SK-N-SH (cell line): ENCODE measurements at regions of chr2 and their contacts with region 1.

Region 1: DNA sequence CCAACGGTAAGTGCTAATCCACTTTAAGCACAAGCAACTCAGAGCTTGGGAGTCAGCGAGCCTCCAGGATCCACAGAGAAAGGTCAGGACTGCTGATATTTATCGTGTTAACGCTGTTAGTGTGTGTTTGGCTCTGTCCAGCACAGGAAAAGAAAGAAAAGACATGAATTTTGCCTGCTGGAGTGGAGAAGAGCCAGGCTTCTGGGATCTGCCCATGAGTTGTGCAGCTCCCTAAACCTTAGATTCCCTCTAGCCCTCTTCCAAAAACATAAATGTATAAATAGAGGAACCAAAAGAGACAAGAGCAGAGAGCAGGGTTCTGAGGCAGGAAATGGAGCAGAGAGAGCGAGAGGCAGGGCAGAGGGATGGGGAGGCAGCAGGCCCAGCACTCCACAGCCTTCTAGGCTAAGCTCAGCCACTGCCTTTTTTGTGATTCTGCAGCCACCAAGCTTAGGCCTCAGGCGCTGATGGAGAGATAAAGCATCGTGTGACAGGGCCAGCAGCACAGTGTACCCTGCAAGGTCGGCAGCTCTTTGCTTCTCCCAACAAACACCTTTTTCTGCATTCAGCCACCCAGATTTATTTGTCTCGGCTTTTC is 14.5 kb upstream of the MAT2A start:
- DNase-seq: peak; percentile 75
- H3K4me3 ChIP-seq: no peak overlapping the region
- H3K27ac ChIP-seq: peak overlapping the region; percentile 40 to 98; a peak in 3 of 4 replicates
- H3K4me1 ChIP-seq: peaks cover 9 to 30% of the 10 kb centered on the region in 2 experiments; a peak in 3 of 4 replicates
- H3K27me3 ChIP-seq: no peaks in the 10 kb centered on the region; the same call in 1 of the 2 replicates
- CTCF ChIP-seq: no peak
- EP300 ChIP-seq: peak in 1 of 2 experiments; percentile 82; a peak in 2 of 4 replicates
- RAD21 ChIP-seq: peak; percentile 43

Region 2: GRCh38 chr2:85437488-85438284 is 86.7 kb before region 1 on chr2:
- CTCF ChIA-PET with region 1: interaction called, 9 read pairs
- POLR2A ChIA-PET with region 1: interaction called, 60 read pairs
- DNase-seq: peak; percentile 97
- H3K4me3 ChIP-seq: peak overlapping the region in 1 of 2 experiments; percentile 42; a peak in 2 of 4 replicates
- H3K27ac ChIP-seq: peak overlapping the region; percentile 58 to 90
- H3K4me1 ChIP-seq: peaks cover 14 to 63% of the 10 kb centered on the region in 2 experiments; a peak in 3 of 4 replicates
- H3K27me3 ChIP-seq: no peaks in the 10 kb centered on the region
- CTCF ChIP-seq: no peak
- EP300 ChIP-seq: peak; percentile 19 to 51; a peak in 2 of 4 replicates
- RAD21 ChIP-seq: no peak

Region 3: GRCh38 chr2:85445316-85446295 is 78.8 kb before region 1 on chr2:
- CTCF ChIA-PET with region 1: interaction called, 3 read pairs
- POLR2A ChIA-PET with region 1: interaction called, 28 read pairs
- DNase-seq: peak; percentile 73
- H3K4me3 ChIP-seq: no peak overlapping the region
- H3K27ac ChIP-seq: peak overlapping the region; percentile 42 to 90; a peak in 3 of 4 replicates
- H3K4me1 ChIP-seq: peaks cover 18 to 33% of the 10 kb centered on the region in 2 experiments; a peak in 2 of 4 replicates
- H3K27me3 ChIP-seq: no peaks in the 10 kb centered on the region
- CTCF ChIP-seq: no peak
- EP300 ChIP-seq: peak in 1 of 2 experiments; percentile 43; a peak in 1 of 4 replicates
- RAD21 ChIP-seq: peak; percentile 23; the same call in 1 of the 2 replicates

Region 4: DNA sequence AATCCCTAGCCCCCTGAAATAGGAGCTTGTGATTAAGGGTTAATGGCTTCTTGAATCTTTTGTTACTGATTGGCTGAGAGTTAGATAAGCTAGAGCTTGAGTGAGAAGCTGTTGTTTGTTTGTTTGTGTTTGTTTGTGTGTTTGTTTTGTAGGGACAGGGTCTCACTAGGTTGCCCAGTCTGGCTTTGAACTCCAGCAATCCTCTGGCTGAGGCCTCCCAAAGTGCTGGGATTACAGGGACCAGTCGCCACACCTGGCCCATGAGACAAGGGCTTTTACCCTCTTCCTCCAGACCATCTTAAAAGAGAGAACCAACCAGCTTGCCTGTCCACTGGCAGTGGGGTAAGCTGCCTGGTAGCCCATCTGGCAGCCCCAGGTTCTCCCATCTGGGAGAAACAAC is 47.8 kb before region 1 on chr2:
- CTCF ChIA-PET with region 1: no interaction called
- POLR2A ChIA-PET with region 1: no interaction called
- DNase-seq: no peak
- H3K4me3 ChIP-seq: no peak overlapping the region
- H3K27ac ChIP-seq: no peak overlapping the region
- H3K4me1 ChIP-seq: no peaks in the 10 kb centered on the region
- H3K27me3 ChIP-seq: no peaks in the 10 kb centered on the region
- CTCF ChIP-seq: no peak
- EP300 ChIP-seq: no peak
- RAD21 ChIP-seq: no peak

Region 5: GRCh38 chr2:85504778-85505323 is 19.6 kb before region 1 on chr2:
- CTCF ChIA-PET with region 1: interaction called, 11 read pairs
- POLR2A ChIA-PET with region 1: interaction called, 12 read pairs
- DNase-seq: peak; percentile 71
- H3K4me3 ChIP-seq: no peak overlapping the region
- H3K27ac ChIP-seq: peak overlapping the region; percentile 60 to 68
- H3K4me1 ChIP-seq: peaks cover 19 to 25% of the 10 kb centered on the region in 2 experiments; a peak in 3 of 4 replicates
- H3K27me3 ChIP-seq: no peaks in the 10 kb centered on the region
- CTCF ChIP-seq: no peak
- EP300 ChIP-seq: peak; percentile 56 to 90; a peak in 3 of 4 replicates
- RAD21 ChIP-seq: peak; percentile 3; the same call in 1 of the 2 replicates

Region 6: GRCh38 chr2:85628658-85629057 is 104.2 kb after region 1 on chr2:
- CTCF ChIA-PET with region 1: no interaction called
- POLR2A ChIA-PET with region 1: no interaction called
- DNase-seq: no peak
- H3K4me3 ChIP-seq: no peak overlapping the region
- H3K27ac ChIP-seq: no peak overlapping the region
- H3K4me1 ChIP-seq: no peaks in the 10 kb centered on the region
- H3K27me3 ChIP-seq: no peaks in the 10 kb centered on the region
- CTCF ChIP-seq: no peak
- EP300 ChIP-seq: no peak
- RAD21 ChIP-seq: no peak